CD4-positive, alpha-beta T cell (primary cell): ENCODE measurements at regions of chr16 and their contacts with region 1.

Region 1: DNA sequence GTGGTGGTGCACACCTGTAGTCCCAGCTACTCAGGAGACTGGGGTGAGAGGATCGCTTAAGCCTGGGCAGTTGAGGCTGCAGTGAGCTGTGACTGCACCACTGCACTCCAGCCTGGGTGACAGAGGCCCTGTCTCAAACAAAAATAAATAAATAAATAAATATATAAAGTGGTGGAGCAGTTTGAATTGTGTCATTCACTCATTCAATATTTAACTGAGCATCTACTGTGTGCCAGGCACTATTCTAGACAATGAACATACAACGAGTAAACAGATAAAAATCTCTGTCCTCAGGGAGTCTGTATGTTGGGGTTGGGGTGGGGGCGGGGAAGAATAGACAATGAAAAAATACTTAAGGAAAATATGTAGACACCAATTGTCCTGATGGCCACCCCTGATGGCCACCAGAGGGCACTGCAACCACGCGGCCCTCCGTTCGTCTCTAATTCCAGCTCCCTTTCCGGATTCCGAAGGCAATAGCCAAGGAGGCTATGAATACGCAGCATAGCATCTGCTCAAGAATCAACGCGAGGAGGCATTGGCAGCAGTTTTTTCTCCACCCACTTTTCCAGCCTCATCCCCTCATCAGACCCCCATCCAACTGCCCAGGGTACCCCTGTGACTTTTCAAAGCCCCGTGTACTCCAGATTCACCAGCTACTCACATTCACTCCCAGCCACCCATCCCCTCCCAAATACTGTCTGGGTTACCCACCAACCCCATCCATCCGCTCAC is 21.4 kb downstream of the QPRT start:
- DNase-seq: peak; percentile 66 to 91 (median 74)
- ATAC-seq: peak; percentile 19
- H3K4me3 ChIP-seq: no peak overlapping the region
- H3K4me3 Mint-ChIP-seq: peak overlapping the region; percentile 76
- H3K27ac ChIP-seq: peak overlapping the region in 1 of 2 donors; percentile 81
- H3K27ac Mint-ChIP-seq: peak overlapping the region; percentile 94
- H3K4me1 ChIP-seq: peaks cover 41% of the 10 kb centered on the region
- H3K4me1 Mint-ChIP-seq: peaks cover 40% of the 10 kb centered on the region
- H3K27me3 ChIP-seq: no peaks in the 10 kb centered on the region
- H3K27me3 Mint-ChIP-seq: no peaks in the 10 kb centered on the region
- CTCF ChIP-seq: peak; percentile 93

Region 2: GRCh38 chr16:29729116-29729521 is 28.7 kb after region 1 on chr16:
- CTCF ChIA-PET with region 1: interaction called, 11 read pairs
- POLR2A ChIA-PET with region 1: interaction called, 11 read pairs
- intact Hi-C with region 1: no loop called
- DNase-seq: peak in 2 of 14 experiments; percentile 31 to 36
- ATAC-seq: no peak
- H3K4me3 ChIP-seq: no peak overlapping the region
- H3K4me3 Mint-ChIP-seq: no peak overlapping the region
- H3K27ac ChIP-seq: no peak overlapping the region
- H3K27ac Mint-ChIP-seq: no peak overlapping the region
- H3K4me1 ChIP-seq: peaks cover 28% of the 10 kb centered on the region
- H3K4me1 Mint-ChIP-seq: peaks cover 28% of the 10 kb centered on the region
- H3K27me3 ChIP-seq: no peaks in the 10 kb centered on the region
- H3K27me3 Mint-ChIP-seq: no peaks in the 10 kb centered on the region
- CTCF ChIP-seq: peak; percentile 58

Region 3: GRCh38 chr16:29757950-29758466 is 57.6 kb after region 1 on chr16:
- CTCF ChIA-PET with region 1: interaction called, 8 read pairs
- POLR2A ChIA-PET with region 1: interaction called, 21 read pairs
- intact Hi-C with region 1: no loop called
- DNase-seq: no peak
- ATAC-seq: no peak
- H3K4me3 ChIP-seq: no peak overlapping the region
- H3K4me3 Mint-ChIP-seq: no peak overlapping the region
- H3K27ac ChIP-seq: no peak overlapping the region
- H3K27ac Mint-ChIP-seq: peak overlapping the region; percentile 80
- H3K4me1 ChIP-seq: peaks cover 49% of the 10 kb centered on the region
- H3K4me1 Mint-ChIP-seq: peaks cover 47% of the 10 kb centered on the region
- H3K27me3 ChIP-seq: no peaks in the 10 kb centered on the region
- H3K27me3 Mint-ChIP-seq: no peaks in the 10 kb centered on the region
- CTCF ChIP-seq: no peak

Region 4: GRCh38 chr16:29815793-29816693 is 115.6 kb after region 1 on chr16 and contains the start of gene PAGR1:
- CTCF ChIA-PET with region 1: interaction called, 38 read pairs
- POLR2A ChIA-PET with region 1: interaction called, 60 read pairs
- intact Hi-C with region 1: loop called in 1 of 2 experiments (anchors 2 kb)
- DNase-seq: peak; percentile 97 to 100 (median 98)
- ATAC-seq: peak; percentile 73
- H3K4me3 ChIP-seq: peak within 1 kb of the TSS; percentile 95
- H3K4me3 Mint-ChIP-seq: peak within 1 kb of the TSS; percentile 97
- H3K27ac ChIP-seq: peak within 1 kb of the TSS; percentile 84 to 94
- H3K27ac Mint-ChIP-seq: peak within 1 kb of the TSS; percentile 90
- H3K4me1 ChIP-seq: peaks cover 92% of the 10 kb centered on the region
- H3K4me1 Mint-ChIP-seq: peaks cover 83% of the 10 kb centered on the region
- H3K27me3 ChIP-seq: no peaks in the 10 kb centered on the region
- H3K27me3 Mint-ChIP-seq: no peaks in the 10 kb centered on the region
- CTCF ChIP-seq: peak; percentile 97
- total RNA-seq, gene PAGR1: 20.3 TPM

Region 5: GRCh38 chr16:29995911-29996772 is 295.7 kb after region 1 on chr16 and contains the start of gene INO80E:
- CTCF ChIA-PET with region 1: interaction called, 3 read pairs
- POLR2A ChIA-PET with region 1: interaction called, 13 read pairs
- intact Hi-C with region 1: no loop called
- DNase-seq: peak; percentile 97 to 100 (median 99)
- ATAC-seq: peak; percentile 95
- H3K4me3 ChIP-seq: peak within 1 kb of the TSS; percentile 83
- H3K4me3 Mint-ChIP-seq: peak within 1 kb of the TSS; percentile 98
- H3K27ac ChIP-seq: peak within 1 kb of the TSS; percentile 98
- H3K27ac Mint-ChIP-seq: peak within 1 kb of the TSS; percentile 99
- H3K4me1 ChIP-seq: peaks cover 30% of the 10 kb centered on the region
- H3K4me1 Mint-ChIP-seq: peaks cover 33% of the 10 kb centered on the region
- H3K27me3 ChIP-seq: no peaks in the 10 kb centered on the region
- H3K27me3 Mint-ChIP-seq: no peaks in the 10 kb centered on the region
- CTCF ChIP-seq: no peak
- total RNA-seq, gene INO80E: 54.6 to 57.6 TPM